ENCODE measurements at regions of chr7 and their contacts with region 1.

Region 1: GRCh38 chr7:1432411-1433082 is 26.7 kb downstream of the MICALL2 start:
- DNase-seq: peak; percentile 89
- ATAC-seq: peak; percentile 82
- H3K4me3 Mint-ChIP-seq: no peak overlapping the region
- H3K27ac Mint-ChIP-seq: no peak overlapping the region
- H3K4me1 Mint-ChIP-seq: no peaks in the 10 kb centered on the region; the same call in 1 of the 2 replicates
- H3K27me3 Mint-ChIP-seq: no peaks in the 10 kb centered on the region; the same call in 1 of the 2 replicates
- CTCF ChIP-seq: peak; percentile 95

Region 2: DNA sequence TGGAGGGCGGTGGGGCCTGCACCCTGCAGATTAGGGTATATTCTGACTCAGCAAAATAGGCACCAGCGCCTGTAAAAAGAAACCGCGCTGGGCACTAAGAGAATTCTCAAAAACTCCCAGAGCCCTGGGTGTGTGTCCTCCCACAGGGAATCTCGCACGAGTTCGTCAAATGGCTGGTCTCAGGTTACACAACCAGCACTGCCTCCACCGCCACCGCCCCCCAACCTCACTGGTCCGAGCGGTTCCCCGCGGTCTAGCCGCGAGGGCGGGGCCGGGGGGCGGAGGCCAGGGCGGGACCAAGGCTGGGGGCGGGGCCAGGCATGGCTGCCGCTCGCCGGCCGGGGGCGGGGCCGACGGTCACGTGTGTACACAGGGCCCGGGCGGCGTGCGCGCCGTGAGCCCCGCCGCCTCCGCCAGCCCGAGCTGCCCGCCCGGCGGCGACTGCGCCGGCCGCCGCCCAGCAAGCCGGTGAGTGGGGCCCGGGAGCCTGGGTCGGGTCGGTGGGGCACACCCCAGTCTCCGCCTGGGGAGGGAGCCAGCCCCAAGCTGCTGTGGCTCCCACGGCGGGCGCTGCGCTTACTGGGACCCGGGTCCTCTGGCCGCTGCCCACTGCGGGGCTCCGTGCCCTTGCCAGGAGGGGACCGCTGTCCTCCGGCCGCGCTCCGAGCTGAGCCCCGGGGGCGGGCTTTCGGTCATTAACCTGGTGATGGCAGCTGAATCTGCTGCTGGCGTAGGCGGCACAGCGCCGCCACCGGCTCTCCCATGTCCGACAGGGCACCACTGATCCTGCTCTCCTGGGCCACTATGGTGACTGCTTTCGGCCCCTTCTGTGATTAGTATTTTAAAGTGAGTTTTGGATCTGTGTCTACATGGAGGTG is 388.1 kb before region 1 on chr7 and contains the start of gene GPR146:
- CTCF ChIA-PET with region 1: no interaction called
- POLR2A ChIA-PET with region 1: no interaction called
- DNase-seq: peak; percentile 99
- ATAC-seq: peak; percentile 93
- H3K4me3 Mint-ChIP-seq: peak within 1 kb of the TSS; percentile 71
- H3K27ac Mint-ChIP-seq: peak within 1 kb of the TSS; percentile 97
- H3K4me1 Mint-ChIP-seq: peaks cover 31% of the 10 kb centered on the region
- H3K27me3 Mint-ChIP-seq: no peaks in the 10 kb centered on the region
- CTCF ChIP-seq: 0 out of 2 replicates have a peak, but pooled peaks have one; percentile 18
- total RNA-seq, gene GPR146: 0.87 to 1.1 TPM (median 0.92 TPM) in 3 replicates

Region 3: GRCh38 chr7:1193593-1194424 is 238.7 kb before region 1 on chr7:
- CTCF ChIA-PET with region 1: interaction called, 14 read pairs
- POLR2A ChIA-PET with region 1: no interaction called
- DNase-seq: peak; percentile 63
- ATAC-seq: peak; percentile 93
- H3K4me3 Mint-ChIP-seq: no peak overlapping the region
- H3K27ac Mint-ChIP-seq: no peak overlapping the region
- H3K4me1 Mint-ChIP-seq: no peaks in the 10 kb centered on the region
- H3K27me3 Mint-ChIP-seq: peaks cover 3% of the 10 kb centered on the region
- CTCF ChIP-seq: no peak

Region 4: DNA sequence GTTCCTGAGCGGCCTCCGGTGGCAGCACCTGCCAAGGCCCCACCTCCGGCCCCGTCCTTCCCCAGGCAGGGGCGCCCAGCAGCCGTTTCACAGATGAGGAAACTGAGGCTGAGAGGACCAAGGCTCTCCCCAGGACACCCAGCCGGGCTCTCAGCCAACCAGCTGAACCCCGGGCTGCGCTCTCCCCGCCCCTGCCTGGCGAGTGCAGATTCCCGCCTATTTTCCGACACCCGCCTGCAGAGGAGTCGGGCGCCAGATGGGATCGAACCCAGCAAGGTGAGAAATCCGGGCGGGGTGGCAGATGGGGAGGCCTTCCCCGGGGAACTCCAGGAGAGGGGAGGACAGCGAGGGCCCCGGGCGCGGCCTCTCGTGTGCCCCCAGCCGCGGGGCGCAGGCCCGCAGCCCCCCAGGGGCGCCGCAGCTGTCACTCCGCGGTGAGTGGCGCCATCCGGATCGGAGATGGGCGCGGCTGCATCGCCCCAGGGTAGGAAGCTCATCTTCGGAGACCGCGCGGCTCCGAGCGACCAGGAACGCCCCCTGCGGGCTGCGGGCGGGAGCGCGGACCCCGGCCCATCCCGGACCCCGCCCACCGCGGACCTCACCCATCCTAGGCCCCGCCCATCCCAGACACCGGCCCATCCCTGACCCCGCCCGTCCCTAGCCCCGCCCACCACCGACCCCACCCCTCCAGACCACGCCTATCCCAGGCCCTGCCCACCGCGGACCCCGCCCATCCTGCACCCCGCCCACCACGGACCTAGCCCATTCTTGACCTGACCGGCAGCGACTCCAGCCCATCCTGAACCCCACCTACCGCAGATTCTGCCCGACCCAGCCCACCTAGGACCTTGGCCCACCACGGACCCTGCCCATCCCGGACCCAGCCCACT is 63.6 kb before region 1 on chr7:
- CTCF ChIA-PET with region 1: interaction called, 13 read pairs
- POLR2A ChIA-PET with region 1: no interaction called
- DNase-seq: peak; percentile 97
- ATAC-seq: peak; percentile 87
- H3K4me3 Mint-ChIP-seq: peak overlapping the region; percentile 62
- H3K27ac Mint-ChIP-seq: no peak overlapping the region
- H3K4me1 Mint-ChIP-seq: peaks cover 7% of the 10 kb centered on the region
- H3K27me3 Mint-ChIP-seq: peaks cover 38% of the 10 kb centered on the region
- CTCF ChIP-seq: peak; percentile 66

Region 5: GRCh38 chr7:1412322-1413261 is 20.0 kb before region 1 on chr7:
- CTCF ChIA-PET with region 1: interaction called, 15 read pairs
- POLR2A ChIA-PET with region 1: no interaction called
- DNase-seq: peak; percentile 95
- ATAC-seq: peak; percentile 95
- H3K4me3 Mint-ChIP-seq: peak overlapping the region; percentile 55
- H3K27ac Mint-ChIP-seq: no peak overlapping the region
- H3K4me1 Mint-ChIP-seq: peaks cover 6% of the 10 kb centered on the region; the same call in 1 of the 2 replicates
- H3K27me3 Mint-ChIP-seq: peaks cover 21% of the 10 kb centered on the region
- CTCF ChIP-seq: peak; percentile 85; the same call in 1 of the 2 replicates

Region 6: DNA sequence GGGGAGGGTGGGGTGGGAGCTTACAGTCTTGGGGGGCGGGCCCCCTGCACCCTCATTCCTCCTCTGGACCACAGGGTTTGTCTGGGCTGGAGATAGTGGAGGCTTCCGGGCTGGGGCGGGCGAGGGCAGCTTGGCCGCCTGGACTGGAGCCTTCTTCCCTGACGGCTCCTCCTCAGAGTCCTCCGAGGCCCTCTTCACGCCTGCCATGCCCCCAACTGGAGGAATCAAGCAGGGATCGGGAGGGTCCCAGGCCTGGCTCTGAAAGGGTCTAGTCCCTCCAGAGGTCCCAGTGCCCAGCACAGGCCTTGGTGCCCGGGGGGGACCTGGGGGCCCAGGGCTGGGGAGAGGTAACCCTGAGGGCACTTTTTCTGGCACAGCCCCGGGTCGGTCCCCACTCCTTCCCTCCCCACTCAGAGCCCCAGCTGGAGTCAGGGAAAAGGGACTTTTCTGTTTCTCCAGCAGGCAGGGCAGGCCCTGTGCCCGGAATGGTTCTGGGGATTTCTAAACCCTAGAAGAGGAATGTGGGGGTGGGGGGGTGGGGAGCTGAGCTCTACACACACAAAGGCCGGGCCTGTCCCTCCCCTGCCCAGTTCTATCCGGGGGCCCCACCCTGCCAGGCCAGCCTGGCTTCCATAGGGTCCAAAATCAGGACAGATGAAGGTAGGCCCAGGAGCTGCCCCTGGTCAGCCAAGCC is 15.2 kb after region 1 on chr7:
- CTCF ChIA-PET with region 1: interaction called, 19 read pairs
- POLR2A ChIA-PET with region 1: no interaction called
- DNase-seq: no peak
- ATAC-seq: no peak
- H3K4me3 Mint-ChIP-seq: no peak overlapping the region
- H3K27ac Mint-ChIP-seq: no peak overlapping the region
- H3K4me1 Mint-ChIP-seq: no peaks in the 10 kb centered on the region
- H3K27me3 Mint-ChIP-seq: no peaks in the 10 kb centered on the region
- CTCF ChIP-seq: no peak

Region 7: GRCh38 chr7:1473864-1474512 is 41.4 kb after region 1 on chr7:
- CTCF ChIA-PET with region 1: interaction called, 24 read pairs
- POLR2A ChIA-PET with region 1: no interaction called
- DNase-seq: peak; percentile 94
- ATAC-seq: peak; percentile 86
- H3K4me3 Mint-ChIP-seq: no peak overlapping the region
- H3K27ac Mint-ChIP-seq: no peak overlapping the region
- H3K4me1 Mint-ChIP-seq: no peaks in the 10 kb centered on the region
- H3K27me3 Mint-ChIP-seq: no peaks in the 10 kb centered on the region
- CTCF ChIP-seq: peak; percentile 93

Region 8: GRCh38 chr7:1503816-1504775 is 71.5 kb after region 1 on chr7 and contains the start of gene INTS1:
- CTCF ChIA-PET with region 1: no interaction called
- POLR2A ChIA-PET with region 1: no interaction called
- DNase-seq: peak; percentile 87
- ATAC-seq: peak; percentile 93
- H3K4me3 Mint-ChIP-seq: peak within 1 kb of the TSS; percentile 85
- H3K27ac Mint-ChIP-seq: peak within 1 kb of the TSS; percentile 36; the same call in 1 of the 2 replicates
- H3K4me1 Mint-ChIP-seq: peaks cover 18% of the 10 kb centered on the region
- H3K27me3 Mint-ChIP-seq: no peaks in the 10 kb centered on the region
- CTCF ChIP-seq: peak; percentile 64; the same call in 1 of the 2 replicates
- total RNA-seq, gene INTS1: 143 to 161 TPM (median 150 TPM) in 3 replicates

Region 9: DNA sequence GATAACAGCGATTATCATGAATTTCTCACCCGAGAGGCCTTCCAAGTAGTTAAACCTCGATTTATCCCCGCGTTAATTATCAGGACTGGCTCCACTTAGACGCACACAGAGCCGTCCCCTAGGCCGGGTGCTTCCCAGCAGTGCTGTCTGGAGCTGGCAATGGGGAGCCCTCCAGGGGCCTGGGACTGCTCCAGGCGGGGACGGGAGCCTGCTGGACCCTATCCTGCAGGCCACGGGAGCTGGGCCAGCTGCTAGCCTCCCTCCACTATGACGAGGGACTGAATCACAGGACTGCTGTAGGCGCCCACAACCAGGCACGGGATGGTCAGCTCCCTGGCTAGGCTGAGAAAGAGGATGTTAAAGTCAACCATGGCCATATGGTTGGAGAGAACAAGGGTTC is 466.6 kb after region 1 on chr7:
- CTCF ChIA-PET with region 1: no interaction called
- POLR2A ChIA-PET with region 1: no interaction called
- DNase-seq: no peak
- ATAC-seq: no peak
- H3K4me3 Mint-ChIP-seq: no peak overlapping the region
- H3K27ac Mint-ChIP-seq: peak overlapping the region; percentile 80
- H3K4me1 Mint-ChIP-seq: no peaks in the 10 kb centered on the region
- H3K27me3 Mint-ChIP-seq: no peaks in the 10 kb centered on the region
- CTCF ChIP-seq: no peak